CD14-positive monocyte (primary cell): ENCODE measurements at regions of chr6 and their contacts with region 1.

Region 1: GRCh38 chr6:30742316-30743098 is at the start of gene FLOT1:
- DNase-seq: peak; percentile 95 to 98 (median 96)
- H3K4me3 ChIP-seq: peak within 1 kb of the TSS; percentile 82 to 97 (median 90)
- H3K4me3 Mint-ChIP-seq: peak within 1 kb of the TSS; percentile 99
- H3K27ac ChIP-seq: peak within 1 kb of the TSS; percentile 64 to 87
- H3K27ac Mint-ChIP-seq: peak within 1 kb of the TSS; percentile 94 to 99 (median 97)
- H3K4me1 ChIP-seq: peaks cover 22 to 49% of the 10 kb centered on the region in 2 donors
- H3K4me1 Mint-ChIP-seq: peaks cover 45% of the 10 kb centered on the region
- H3K27me3 ChIP-seq: peaks cover 0 to 4% of the 10 kb centered on the region in 2 donors
- H3K27me3 Mint-ChIP-seq: peaks cover 5 to 12% (median 5%) of the 10 kb centered on the region in 3 donors
- CTCF ChIP-seq: no peak
- polyA plus RNA-seq, gene FLOT1: 124 to 153 (median 132) TPM

Region 2: GRCh38 chr6:30664994-30665767 is 77.3 kb before region 1 on chr6:
- intact Hi-C with region 1: no loop called
- DNase-seq: no peak
- H3K4me3 ChIP-seq: no peak overlapping the region
- H3K4me3 Mint-ChIP-seq: no peak overlapping the region
- H3K27ac ChIP-seq: no peak overlapping the region
- H3K27ac Mint-ChIP-seq: peak overlapping the region in 1 of 7 donors; percentile 8
- H3K4me1 ChIP-seq: no peaks in the 10 kb centered on the region
- H3K4me1 Mint-ChIP-seq: peaks cover 3% of the 10 kb centered on the region
- H3K27me3 ChIP-seq: no peaks in the 10 kb centered on the region
- H3K27me3 Mint-ChIP-seq: peaks cover 0 to 2% (median 0%) of the 10 kb centered on the region in 3 donors
- CTCF ChIP-seq: no peak

Region 3: GRCh38 chr6:30690403-30691207 is 51.9 kb before region 1 on chr6 and contains the start of gene NRM:
- intact Hi-C with region 1: no loop called
- DNase-seq: peak; percentile 75 to 77 (median 77)
- H3K4me3 ChIP-seq: peak within 1 kb of the TSS; percentile 70 to 100 (median 95)
- H3K4me3 Mint-ChIP-seq: peak within 1 kb of the TSS; percentile 97 to 99
- H3K27ac ChIP-seq: peak within 1 kb of the TSS; percentile 51 to 99
- H3K27ac Mint-ChIP-seq: peak within 1 kb of the TSS; percentile 93 to 99 (median 98)
- H3K4me1 ChIP-seq: peaks cover 38 to 43% of the 10 kb centered on the region in 2 donors
- H3K4me1 Mint-ChIP-seq: peaks cover 43% of the 10 kb centered on the region
- H3K27me3 ChIP-seq: no peaks in the 10 kb centered on the region
- H3K27me3 Mint-ChIP-seq: peaks cover 0 to 4% (median 0%) of the 10 kb centered on the region in 3 donors
- CTCF ChIP-seq: no peak
- polyA plus RNA-seq, gene NRM: 25.9 to 36.0 (median 35.0) TPM

Region 4: GRCh38 chr6:30775104-30775503 is 32.6 kb after region 1 on chr6:
- intact Hi-C with region 1: loop called in 1 of 2 experiments (anchors 5 kb)
- DNase-seq: no peak
- H3K4me3 ChIP-seq: no peak overlapping the region
- H3K4me3 Mint-ChIP-seq: no peak overlapping the region
- H3K27ac ChIP-seq: no peak overlapping the region
- H3K27ac Mint-ChIP-seq: peak overlapping the region in 1 of 7 donors; percentile 65
- H3K4me1 ChIP-seq: peaks cover 49% of the 10 kb centered on the region in 2 donors
- H3K4me1 Mint-ChIP-seq: peaks cover 57% of the 10 kb centered on the region
- H3K27me3 ChIP-seq: no peaks in the 10 kb centered on the region
- H3K27me3 Mint-ChIP-seq: peaks cover 0 to 6% (median 1%) of the 10 kb centered on the region in 3 donors
- CTCF ChIP-seq: no peak

Region 5: GRCh38 chr6:30781743-30782424 is 39.4 kb after region 1 on chr6:
- intact Hi-C with region 1: loop called (anchors 2 to 5 kb)
- DNase-seq: peak; percentile 98 to 99 (median 99)
- H3K4me3 ChIP-seq: peak overlapping the region in 1 of 3 experiments; percentile 53
- H3K4me3 Mint-ChIP-seq: peak overlapping the region in 1 of 2 donors; percentile 78
- H3K27ac ChIP-seq: peak overlapping the region; percentile 91 to 98
- H3K27ac Mint-ChIP-seq: peak overlapping the region; percentile 95 to 100 (median 99)
- H3K4me1 ChIP-seq: peaks cover 99 to 100% of the 10 kb centered on the region in 2 donors
- H3K4me1 Mint-ChIP-seq: peaks cover 92% of the 10 kb centered on the region
- H3K27me3 ChIP-seq: no peaks in the 10 kb centered on the region
- H3K27me3 Mint-ChIP-seq: no peaks in the 10 kb centered on the region
- CTCF ChIP-seq: no peak

Region 6: DNA sequence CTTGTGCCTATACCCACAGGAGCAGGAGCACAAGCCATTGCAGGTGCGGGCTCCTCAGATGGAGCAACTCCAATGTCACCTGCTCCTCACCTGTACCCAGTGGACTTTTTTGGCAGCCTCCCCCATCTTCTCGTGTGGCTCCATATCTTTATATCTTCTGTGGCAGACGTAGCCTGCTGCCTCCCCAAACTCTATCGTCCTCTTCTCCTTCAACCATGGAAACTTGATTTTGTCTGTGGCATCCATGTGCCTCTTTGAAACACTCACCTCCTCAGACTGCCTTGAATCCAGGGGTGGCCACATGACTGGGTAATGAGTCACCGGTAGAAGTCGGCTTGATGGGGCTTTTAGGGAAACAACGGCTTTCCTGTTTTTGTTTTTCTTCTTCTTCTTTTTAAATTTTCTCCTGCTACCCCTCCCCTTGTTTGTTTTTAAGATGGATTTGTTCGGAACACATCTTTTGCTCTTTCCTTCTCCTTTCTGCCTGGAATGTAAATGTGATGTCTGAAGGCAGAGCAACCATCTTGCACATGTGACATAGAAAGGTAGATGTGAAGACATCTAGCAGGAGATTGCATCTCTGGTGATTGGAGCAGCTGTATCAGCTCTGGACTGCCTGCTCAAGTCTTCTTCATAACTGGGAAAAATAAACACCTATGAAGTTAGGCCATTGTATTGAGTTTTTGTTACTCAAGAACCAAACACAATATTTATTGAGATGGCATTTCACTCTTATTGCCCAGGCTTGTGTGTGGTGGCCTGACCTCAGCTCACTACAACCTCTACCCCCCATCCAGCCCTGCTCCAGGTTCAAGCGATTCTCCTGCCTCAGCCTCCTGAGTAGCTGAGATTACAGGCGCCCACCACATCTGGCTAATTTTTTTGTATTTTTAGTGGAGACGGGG is 71.9 kb after region 1 on chr6:
- intact Hi-C with region 1: loop called (anchors 5 kb)
- DNase-seq: peak; percentile 82 to 95 (median 91)
- H3K4me3 ChIP-seq: peak overlapping the region in 1 of 3 experiments; percentile 21
- H3K4me3 Mint-ChIP-seq: peak overlapping the region in 1 of 2 donors; percentile 75
- H3K27ac ChIP-seq: peak overlapping the region; percentile 86 to 90
- H3K27ac Mint-ChIP-seq: peak overlapping the region; percentile 90 to 98 (median 96)
- H3K4me1 ChIP-seq: peaks cover 62 to 71% of the 10 kb centered on the region in 2 donors
- H3K4me1 Mint-ChIP-seq: peaks cover 73% of the 10 kb centered on the region
- H3K27me3 ChIP-seq: no peaks in the 10 kb centered on the region
- H3K27me3 Mint-ChIP-seq: peaks cover 0 to 6% (median 0%) of the 10 kb centered on the region in 3 donors
- CTCF ChIP-seq: no peak

Region 7: DNA sequence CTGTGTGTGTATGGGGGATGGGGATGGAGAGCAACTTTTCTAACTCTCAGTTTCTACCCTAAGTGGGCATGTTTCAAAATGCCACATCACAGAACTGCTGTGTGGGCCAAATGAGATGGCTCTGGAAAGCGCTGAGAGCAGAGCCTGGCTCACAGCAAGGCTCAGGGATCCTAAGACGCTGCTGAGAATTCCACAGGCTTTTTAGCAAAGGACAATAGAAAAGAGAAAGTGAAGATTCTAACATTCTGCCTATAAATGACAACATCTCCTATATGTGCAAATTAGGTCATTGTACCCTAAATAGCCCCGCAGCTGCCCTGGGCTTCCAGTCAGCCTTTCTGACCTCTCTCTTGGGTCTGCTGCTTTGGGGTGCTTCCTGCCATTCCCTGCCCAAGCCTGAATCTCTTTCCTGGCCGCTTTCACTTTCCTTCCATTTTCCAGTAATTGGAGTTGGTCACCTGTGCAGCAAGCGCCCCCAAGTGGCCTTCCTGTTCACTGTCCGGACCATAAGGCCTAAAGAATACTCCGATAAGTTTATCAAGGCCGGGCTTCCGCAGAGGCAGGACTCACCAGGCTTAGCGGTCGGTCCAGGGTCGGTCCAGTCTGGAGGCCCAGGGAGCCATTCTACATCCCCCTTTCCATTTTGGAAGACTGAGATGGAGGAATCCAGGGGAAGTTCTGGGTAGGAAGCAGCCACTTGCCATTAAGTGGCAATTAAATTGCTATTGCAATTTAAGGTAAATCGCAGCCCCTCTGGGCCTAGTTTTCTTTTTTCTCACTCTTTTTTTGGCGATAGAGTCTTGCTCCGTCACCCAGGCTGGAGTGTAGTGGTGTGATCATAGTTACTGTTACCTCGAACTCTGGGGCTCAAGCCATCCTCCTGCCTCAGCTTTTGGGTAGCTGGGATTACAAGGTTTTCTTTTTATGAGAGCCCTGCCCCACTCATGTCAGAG is 135.2 kb after region 1 on chr6:
- intact Hi-C with region 1: loop called in 1 of 2 experiments (anchors 2 kb)
- DNase-seq: peak; percentile 72 to 84 (median 82)
- H3K4me3 ChIP-seq: peak overlapping the region; percentile 15 to 73 (median 38)
- H3K4me3 Mint-ChIP-seq: peak overlapping the region; percentile 84 to 94
- H3K27ac ChIP-seq: peak overlapping the region in 1 of 2 donors; percentile 46
- H3K27ac Mint-ChIP-seq: peak overlapping the region in 6 of 7 donors; percentile 39 to 86 (median 70)
- H3K4me1 ChIP-seq: peaks cover 9 to 10% of the 10 kb centered on the region in 2 donors
- H3K4me1 Mint-ChIP-seq: peaks cover 8% of the 10 kb centered on the region
- H3K27me3 ChIP-seq: peaks cover 0 to 18% of the 10 kb centered on the region in 2 donors
- H3K27me3 Mint-ChIP-seq: peaks cover 12 to 20% (median 14%) of the 10 kb centered on the region in 3 donors
- CTCF ChIP-seq: peak; percentile 89

Region 8: GRCh38 chr6:31087494-31088089 is 345.1 kb after region 1 on chr6:
- intact Hi-C with region 1: loop called in 1 of 2 experiments (anchors 10 kb)
- DNase-seq: peak; percentile 75 to 83 (median 81)
- H3K4me3 ChIP-seq: no peak overlapping the region
- H3K4me3 Mint-ChIP-seq: no peak overlapping the region
- H3K27ac ChIP-seq: no peak overlapping the region
- H3K27ac Mint-ChIP-seq: no peak overlapping the region
- H3K4me1 ChIP-seq: peaks cover 0 to 7% of the 10 kb centered on the region in 2 donors
- H3K4me1 Mint-ChIP-seq: peaks cover 11% of the 10 kb centered on the region
- H3K27me3 ChIP-seq: peaks cover 5 to 11% of the 10 kb centered on the region in 2 donors
- H3K27me3 Mint-ChIP-seq: peaks cover 4 to 11% (median 9%) of the 10 kb centered on the region in 3 donors
- CTCF ChIP-seq: peak; percentile 86